ENCODE measurements at regions of chr4 and their contacts with region 1.

Region 1: DNA sequence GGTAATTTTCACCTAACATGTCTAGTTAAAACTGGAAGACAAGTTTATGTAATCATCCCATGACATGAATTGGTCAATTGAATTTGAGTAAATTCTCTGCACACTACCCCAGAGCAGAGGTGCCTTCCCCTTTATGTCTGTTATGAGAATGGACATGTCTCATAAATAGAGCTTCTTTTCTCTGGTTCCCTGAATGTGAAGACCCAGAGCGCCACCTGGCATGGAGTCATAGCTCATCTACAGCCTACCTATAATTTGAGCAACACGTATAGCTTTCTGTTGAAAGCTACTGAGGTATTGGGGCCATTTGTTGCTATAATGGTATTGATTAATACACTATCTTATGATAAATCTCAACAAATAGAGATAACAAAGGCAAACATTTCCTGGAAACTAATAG is 626.5 kb upstream of the GALNTL6 start:
- DNase-seq: peak; percentile 19 to 35
- H3K4me3 ChIP-seq: no peak overlapping the region
- H3K4me3 Mint-ChIP-seq: no peak overlapping the region
- H3K27ac Mint-ChIP-seq: no peak overlapping the region
- H3K4me1 ChIP-seq: no peaks in the 10 kb centered on the region
- H3K4me1 Mint-ChIP-seq: no peaks in the 10 kb centered on the region
- H3K27me3 ChIP-seq: no peaks in the 10 kb centered on the region
- H3K27me3 Mint-ChIP-seq: no peaks in the 10 kb centered on the region
- CTCF ChIP-seq: peak in 1 of 2 experiments; percentile 7

Region 2: GRCh38 chr4:170990989-170991589 is 195.6 kb before region 1 on chr4:
- CTCF ChIA-PET with region 1: interaction called, 17 read pairs
- POLR2A ChIA-PET with region 1: no interaction called
- intact Hi-C with region 1: loop called (anchors 1 kb)
- DNase-seq: peak; percentile 35
- H3K4me3 ChIP-seq: no peak overlapping the region
- H3K4me3 Mint-ChIP-seq: no peak overlapping the region
- H3K27ac Mint-ChIP-seq: no peak overlapping the region
- H3K4me1 ChIP-seq: no peaks in the 10 kb centered on the region
- H3K4me1 Mint-ChIP-seq: no peaks in the 10 kb centered on the region
- H3K27me3 ChIP-seq: no peaks in the 10 kb centered on the region
- H3K27me3 Mint-ChIP-seq: no peaks in the 10 kb centered on the region
- CTCF ChIP-seq: peak; percentile 49 to 51

Region 3: GRCh38 chr4:171067422-171067821 is 119.3 kb before region 1 on chr4:
- CTCF ChIA-PET with region 1: no interaction called
- POLR2A ChIA-PET with region 1: no interaction called
- intact Hi-C with region 1: loop called (anchors 1 kb)
- DNase-seq: no peak
- H3K4me3 ChIP-seq: no peak overlapping the region
- H3K4me3 Mint-ChIP-seq: no peak overlapping the region
- H3K27ac Mint-ChIP-seq: no peak overlapping the region
- H3K4me1 ChIP-seq: no peaks in the 10 kb centered on the region
- H3K4me1 Mint-ChIP-seq: no peaks in the 10 kb centered on the region
- H3K27me3 ChIP-seq: no peaks in the 10 kb centered on the region
- H3K27me3 Mint-ChIP-seq: no peaks in the 10 kb centered on the region
- CTCF ChIP-seq: no peak

Region 4: DNA sequence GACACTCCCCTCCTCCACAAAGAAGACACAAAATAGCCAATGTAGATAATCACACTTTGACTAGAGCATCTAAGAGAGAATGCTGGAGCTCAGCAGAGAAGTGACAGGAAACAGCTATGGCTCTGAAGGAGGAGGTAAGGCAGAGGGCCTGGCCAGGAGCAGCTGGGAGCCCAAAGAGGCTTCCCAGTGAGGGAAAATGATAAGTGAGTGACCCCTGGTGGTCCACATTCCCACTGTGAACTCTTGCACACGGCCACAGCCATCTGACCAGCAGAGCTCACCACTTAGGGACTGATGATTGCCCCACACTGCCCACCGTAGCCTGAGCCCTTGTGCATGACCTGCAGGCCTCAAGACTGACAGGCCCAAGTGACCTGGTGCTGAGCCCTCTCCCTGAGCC is 463.8 kb after region 1 on chr4:
- CTCF ChIA-PET with region 1: no interaction called
- POLR2A ChIA-PET with region 1: no interaction called
- intact Hi-C with region 1: loop called (anchors 2 kb)
- DNase-seq: peak in 1 of 2 experiments; percentile 10
- H3K4me3 ChIP-seq: no peak overlapping the region
- H3K4me3 Mint-ChIP-seq: no peak overlapping the region
- H3K27ac Mint-ChIP-seq: no peak overlapping the region
- H3K4me1 ChIP-seq: no peaks in the 10 kb centered on the region
- H3K4me1 Mint-ChIP-seq: no peaks in the 10 kb centered on the region
- H3K27me3 ChIP-seq: no peaks in the 10 kb centered on the region
- H3K27me3 Mint-ChIP-seq: no peaks in the 10 kb centered on the region
- CTCF ChIP-seq: peak in 1 of 2 experiments; percentile 6

Region 5: DNA sequence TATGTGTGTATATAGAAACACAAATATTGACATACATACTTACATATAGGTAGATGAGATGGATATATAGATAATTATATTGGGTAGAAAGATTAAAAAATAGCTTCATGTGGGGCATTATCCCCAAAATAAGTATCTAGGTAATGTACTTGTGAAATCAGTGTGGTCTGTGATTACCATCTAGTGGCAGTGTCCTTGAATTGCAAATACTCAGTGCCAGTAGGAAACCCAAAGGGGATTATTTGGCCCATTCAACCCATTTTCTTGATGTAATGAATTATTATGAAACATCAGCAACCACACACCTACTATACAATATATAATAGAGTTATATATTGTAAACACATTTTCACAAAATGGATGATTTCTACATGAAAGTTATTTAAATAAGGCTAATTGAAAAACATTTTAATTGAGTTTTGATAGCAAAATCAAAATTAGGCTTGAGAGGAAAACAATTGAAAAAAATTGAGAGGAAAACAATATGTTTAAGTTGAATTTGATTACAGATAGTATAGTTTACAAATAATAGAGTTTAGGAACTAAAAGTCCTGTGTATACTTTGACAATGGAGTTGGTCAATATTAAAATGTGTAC is 1015.9 kb after region 1 on chr4:
- CTCF ChIA-PET with region 1: no interaction called
- POLR2A ChIA-PET with region 1: no interaction called
- intact Hi-C with region 1: loop called (anchors 5 kb)
- DNase-seq: peak in 1 of 2 experiments; percentile 22
- H3K4me3 ChIP-seq: no peak overlapping the region
- H3K4me3 Mint-ChIP-seq: no peak overlapping the region
- H3K27ac Mint-ChIP-seq: no peak overlapping the region
- H3K4me1 ChIP-seq: no peaks in the 10 kb centered on the region
- H3K4me1 Mint-ChIP-seq: peaks cover 7% of the 10 kb centered on the region
- H3K27me3 ChIP-seq: no peaks in the 10 kb centered on the region
- H3K27me3 Mint-ChIP-seq: no peaks in the 10 kb centered on the region
- CTCF ChIP-seq: peak; percentile 42 to 43